Activated CD4-positive, alpha-beta memory T cell treated with anti-CD3 and anti-CD28 coated beads, Interleukin-2, amount 10 ng/mL, durations not matched to agents 7 days and 5 days (primary cell): ENCODE measurements at regions of chr19 and their contacts with region 1.

Region 1: DNA sequence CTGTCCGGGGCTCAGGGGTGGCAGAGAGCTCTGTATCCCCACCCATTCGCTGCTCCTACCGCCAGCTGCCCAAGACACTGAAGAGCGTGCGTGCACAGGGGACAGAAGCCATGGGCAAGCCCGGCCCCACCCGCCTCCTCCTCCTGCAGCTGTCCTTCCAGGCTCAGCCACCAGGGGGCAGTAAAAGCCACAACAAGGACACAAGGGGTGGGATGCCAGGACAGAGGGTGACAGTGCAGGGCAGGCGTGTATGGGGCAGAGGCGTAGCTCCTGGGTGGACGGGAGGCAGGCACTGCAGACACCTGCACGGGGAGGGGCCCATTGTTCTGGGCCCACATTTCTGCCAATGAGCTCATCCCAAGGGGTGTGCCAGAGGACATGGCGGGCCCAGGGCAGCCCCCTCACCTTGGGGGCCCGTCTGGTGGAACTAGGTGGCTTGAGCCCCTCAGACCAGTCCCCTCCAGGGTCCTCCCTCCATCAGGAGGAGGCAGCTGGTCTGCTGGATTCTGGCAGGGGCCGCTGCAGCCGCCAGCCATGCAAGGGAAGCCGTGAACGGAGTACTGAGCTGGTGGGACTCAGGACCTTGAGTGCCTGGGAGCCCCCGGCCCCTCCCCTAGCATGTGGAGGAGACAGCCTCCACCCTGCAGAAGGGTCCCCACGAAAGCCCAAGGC is 61.1 kb downstream of the MLLT1 start:
- DNase-seq: peak; percentile 86
- H3K4me3 Mint-ChIP-seq: no peak overlapping the region
- H3K27ac Mint-ChIP-seq: no peak overlapping the region
- H3K4me1 Mint-ChIP-seq: no peaks in the 10 kb centered on the region
- H3K27me3 Mint-ChIP-seq: no peaks in the 10 kb centered on the region

Region 2: GRCh38 chr19:6125571-6125989 is 93.0 kb before region 1 on chr19:
- CTCF ChIA-PET with region 1: interaction called, 10 read pairs
- POLR2A ChIA-PET with region 1: no interaction called
- DNase-seq: peak; percentile 67
- H3K4me3 Mint-ChIP-seq: no peak overlapping the region
- H3K27ac Mint-ChIP-seq: no peak overlapping the region
- H3K4me1 Mint-ChIP-seq: no peaks in the 10 kb centered on the region
- H3K27me3 Mint-ChIP-seq: peaks cover 1% of the 10 kb centered on the region

Region 3: DNA sequence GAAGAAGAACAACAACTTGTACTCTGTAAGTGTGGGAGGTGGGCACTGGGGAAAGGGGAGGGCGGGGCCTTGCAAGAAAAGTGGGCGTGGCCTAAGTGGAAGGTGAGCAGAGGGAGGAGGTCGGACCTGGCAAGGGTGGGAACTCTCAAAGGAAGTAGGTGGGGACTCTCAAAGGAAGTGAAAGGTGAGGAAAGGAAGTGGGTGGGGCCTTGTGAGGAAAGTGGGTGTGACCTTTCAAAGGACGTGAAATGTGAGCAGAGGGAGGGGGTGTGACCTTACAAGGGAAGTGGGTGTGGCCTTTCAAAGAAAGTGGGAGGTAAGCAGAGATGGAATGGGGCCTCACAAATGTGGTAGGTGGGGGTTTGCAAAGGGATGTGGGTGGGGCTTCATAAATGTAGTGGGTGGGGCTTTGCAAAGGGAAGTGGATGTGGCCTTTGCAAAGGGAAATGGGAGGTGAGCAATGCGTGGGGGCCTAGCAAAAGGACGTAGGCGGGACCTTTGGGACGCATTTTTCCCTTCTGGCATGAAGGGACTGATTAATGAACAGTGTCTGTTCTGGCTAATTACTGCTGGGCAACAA is 57.3 kb before region 1 on chr19:
- CTCF ChIA-PET with region 1: no interaction called
- POLR2A ChIA-PET with region 1: no interaction called
- DNase-seq: peak; percentile 77
- H3K4me3 Mint-ChIP-seq: no peak overlapping the region
- H3K27ac Mint-ChIP-seq: peak overlapping the region; percentile 61
- H3K4me1 Mint-ChIP-seq: peaks cover 13% of the 10 kb centered on the region
- H3K27me3 Mint-ChIP-seq: peaks cover 5% of the 10 kb centered on the region

Region 4: GRCh38 chr19:6199240-6199983 is 19.2 kb before region 1 on chr19:
- CTCF ChIA-PET with region 1: interaction called, 14 read pairs
- POLR2A ChIA-PET with region 1: no interaction called
- DNase-seq: peak; percentile 100
- H3K4me3 Mint-ChIP-seq: peak overlapping the region; percentile 93
- H3K27ac Mint-ChIP-seq: peak overlapping the region; percentile 69
- H3K4me1 Mint-ChIP-seq: peaks cover 17% of the 10 kb centered on the region
- H3K27me3 Mint-ChIP-seq: no peaks in the 10 kb centered on the region

Region 5: GRCh38 chr19:6238643-6239281 is 20.1 kb after region 1 on chr19:
- CTCF ChIA-PET with region 1: interaction called, 13 read pairs
- POLR2A ChIA-PET with region 1: no interaction called
- DNase-seq: no peak
- H3K4me3 Mint-ChIP-seq: no peak overlapping the region
- H3K27ac Mint-ChIP-seq: no peak overlapping the region
- H3K4me1 Mint-ChIP-seq: peaks cover 20% of the 10 kb centered on the region
- H3K27me3 Mint-ChIP-seq: no peaks in the 10 kb centered on the region

Region 6: DNA sequence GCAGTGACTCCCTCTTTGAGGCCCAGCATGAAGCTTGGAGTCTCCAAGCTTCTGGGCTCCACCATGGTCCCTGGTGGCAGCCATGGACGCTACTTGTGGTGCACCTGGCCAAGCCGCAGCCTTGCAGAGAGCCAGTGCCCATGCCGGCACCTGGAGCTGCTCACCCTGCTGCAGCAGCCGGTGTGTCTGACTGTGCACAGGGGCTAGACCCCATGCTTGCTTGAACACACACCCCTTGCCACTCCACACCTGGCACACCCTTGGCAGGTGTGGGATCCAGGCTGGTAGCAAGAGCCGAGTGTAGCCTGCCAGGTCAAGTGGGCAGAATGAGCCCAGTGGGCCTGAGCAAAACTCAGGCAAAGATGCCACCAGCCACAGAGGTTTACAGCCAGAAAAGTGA is 79.8 kb after region 1 on chr19:
- CTCF ChIA-PET with region 1: interaction called, 17 read pairs
- POLR2A ChIA-PET with region 1: no interaction called
- DNase-seq: no peak
- H3K4me3 Mint-ChIP-seq: no peak overlapping the region
- H3K27ac Mint-ChIP-seq: no peak overlapping the region
- H3K4me1 Mint-ChIP-seq: no peaks in the 10 kb centered on the region
- H3K27me3 Mint-ChIP-seq: peaks cover 2% of the 10 kb centered on the region